ENCODE measurements at regions of chr17 and their contacts with region 1.

Region 1: DNA sequence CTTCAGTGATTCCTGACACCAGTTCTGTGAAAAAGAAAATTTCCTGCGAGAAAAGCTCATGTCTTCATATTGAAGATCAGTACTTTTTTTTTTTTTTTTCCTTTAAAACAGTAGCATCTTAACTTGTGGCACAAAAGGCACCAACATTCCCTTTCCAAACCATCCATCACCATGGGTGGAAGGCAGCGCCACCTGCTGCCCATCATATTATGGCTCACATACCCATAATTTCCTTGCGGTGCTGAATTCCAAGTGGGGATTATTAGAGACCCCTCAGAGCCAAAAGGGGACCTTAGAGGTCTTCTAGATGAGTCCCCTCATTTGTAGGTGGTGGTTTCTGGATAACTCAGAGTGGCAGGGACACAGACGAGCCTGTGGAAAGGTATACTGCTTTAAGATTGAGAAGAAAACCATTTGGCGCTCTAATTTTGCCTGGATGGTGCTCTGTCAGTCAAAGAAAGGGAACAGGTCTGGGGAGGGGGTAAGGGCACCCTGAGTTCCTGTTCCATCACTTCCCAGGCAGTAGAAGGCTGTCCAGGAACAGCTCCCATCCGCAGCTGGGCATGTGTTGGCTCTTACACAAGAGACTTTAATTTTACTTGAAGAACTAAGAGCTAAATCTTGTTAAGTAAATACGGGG is 7.9 kb upstream of the SOST start:
- H3K4me3 ChIP-seq: no peak overlapping the region
- H3K27ac ChIP-seq: no peak overlapping the region
- H3K4me1 ChIP-seq: no peaks in the 10 kb centered on the region
- CTCF ChIP-seq: peak; percentile 32; the same call in 1 of the 2 replicates

Region 2: GRCh38 chr17:43546319-43547188 is 220.0 kb before region 1 on chr17 and contains the start of gene ETV4:
- CTCF ChIA-PET with region 1: interaction called, 14 read pairs
- POLR2A ChIA-PET with region 1: no interaction called
- H3K4me3 ChIP-seq: peak within 1 kb of the TSS; percentile 36
- H3K27ac ChIP-seq: peak within 1 kb of the TSS; percentile 52; the same call in 1 of the 2 replicates
- H3K4me1 ChIP-seq: peaks cover 17% of the 10 kb centered on the region
- CTCF ChIP-seq: no peak

Region 3: GRCh38 chr17:43720311-43721060 is 46.0 kb before region 1 on chr17:
- CTCF ChIA-PET with region 1: interaction called, 11 read pairs
- POLR2A ChIA-PET with region 1: interaction called, 5 read pairs
- H3K4me3 ChIP-seq: peak overlapping the region; percentile 32
- H3K27ac ChIP-seq: peak overlapping the region; percentile 67; the same call in 1 of the 2 replicates
- H3K4me1 ChIP-seq: peaks cover 9% of the 10 kb centered on the region
- CTCF ChIP-seq: no peak

Region 4: GRCh38 chr17:43778337-43779144 is 12.0 kb after region 1 on chr17 and contains the start of gene DUSP3:
- CTCF ChIA-PET with region 1: interaction called, 51 read pairs
- POLR2A ChIA-PET with region 1: interaction called, 3 read pairs
- H3K4me3 ChIP-seq: peak within 1 kb of the TSS; percentile 85
- H3K27ac ChIP-seq: peak within 1 kb of the TSS; percentile 93
- H3K4me1 ChIP-seq: no peaks in the 10 kb centered on the region
- CTCF ChIP-seq: no peak

Region 5: GRCh38 chr17:43784628-43785101 is 18.1 kb after region 1 on chr17:
- CTCF ChIA-PET with region 1: interaction called, 23 read pairs
- POLR2A ChIA-PET with region 1: no interaction called
- H3K4me3 ChIP-seq: no peak overlapping the region
- H3K27ac ChIP-seq: no peak overlapping the region
- H3K4me1 ChIP-seq: no peaks in the 10 kb centered on the region
- CTCF ChIP-seq: no peak

Region 6: GRCh38 chr17:44086364-44087311 is 320.1 kb after region 1 on chr17:
- CTCF ChIA-PET with region 1: no interaction called
- POLR2A ChIA-PET with region 1: no interaction called
- H3K4me3 ChIP-seq: no peak overlapping the region
- H3K27ac ChIP-seq: peak overlapping the region; percentile 25; the same call in 1 of the 2 replicates
- H3K4me1 ChIP-seq: peaks cover 10% of the 10 kb centered on the region
- CTCF ChIP-seq: no peak